AG04449 (cell line): ENCODE measurements at regions of chr15 and their contacts with region 1.

Region 1: DNA sequence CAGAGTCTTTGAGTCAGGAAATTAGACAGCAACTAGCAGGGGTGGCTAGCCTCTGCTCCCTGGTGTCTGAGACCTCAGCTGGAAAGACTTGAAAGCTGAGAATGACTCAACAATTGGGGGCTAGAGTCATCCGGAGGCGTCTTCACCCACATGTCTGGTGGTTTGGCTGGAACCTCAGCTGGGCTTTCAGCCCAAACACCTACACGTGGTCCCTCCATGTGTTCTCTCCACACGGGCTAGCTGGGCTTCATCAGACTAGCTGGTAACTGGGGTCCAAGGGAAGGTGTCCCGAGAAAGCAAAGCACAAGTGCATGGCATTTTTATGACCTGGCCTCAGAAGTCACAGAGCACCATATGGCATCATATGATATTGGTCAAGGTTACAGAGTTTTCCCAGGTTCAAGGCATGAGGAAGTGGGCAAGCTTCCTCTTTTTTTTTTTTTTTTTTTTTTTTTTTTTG is 19.9 kb upstream of the ABHD2 start:
- DNase-seq: peak; percentile 69
- H3K4me3 ChIP-seq: no peak overlapping the region
- CTCF ChIP-seq: no peak

Region 2: DNA sequence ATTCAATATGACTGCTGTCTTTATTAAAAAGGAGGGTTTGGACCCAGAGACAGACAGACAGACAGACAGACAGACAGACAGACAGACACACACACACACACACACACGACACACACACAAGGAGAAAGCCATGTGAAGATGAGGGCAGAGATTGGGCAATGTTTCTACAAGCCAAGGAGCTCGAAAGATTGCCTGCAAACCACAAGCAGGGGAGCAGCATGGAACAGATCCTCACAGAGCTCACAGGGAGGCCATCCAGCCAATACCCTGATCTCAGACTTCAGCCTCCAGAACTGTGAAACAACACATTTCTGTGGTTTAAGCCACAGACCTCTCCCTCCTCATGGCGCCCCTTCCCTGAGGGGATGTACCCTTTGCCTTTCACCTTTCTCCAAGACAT is 15.9 kb before region 1 on chr15:
- CTCF ChIA-PET with region 1: interaction called, 33 read pairs
- POLR2A ChIA-PET with region 1: interaction called, 10 read pairs
- DNase-seq: peak; percentile 99
- H3K4me3 ChIP-seq: no peak overlapping the region
- CTCF ChIP-seq: no peak

Region 3: DNA sequence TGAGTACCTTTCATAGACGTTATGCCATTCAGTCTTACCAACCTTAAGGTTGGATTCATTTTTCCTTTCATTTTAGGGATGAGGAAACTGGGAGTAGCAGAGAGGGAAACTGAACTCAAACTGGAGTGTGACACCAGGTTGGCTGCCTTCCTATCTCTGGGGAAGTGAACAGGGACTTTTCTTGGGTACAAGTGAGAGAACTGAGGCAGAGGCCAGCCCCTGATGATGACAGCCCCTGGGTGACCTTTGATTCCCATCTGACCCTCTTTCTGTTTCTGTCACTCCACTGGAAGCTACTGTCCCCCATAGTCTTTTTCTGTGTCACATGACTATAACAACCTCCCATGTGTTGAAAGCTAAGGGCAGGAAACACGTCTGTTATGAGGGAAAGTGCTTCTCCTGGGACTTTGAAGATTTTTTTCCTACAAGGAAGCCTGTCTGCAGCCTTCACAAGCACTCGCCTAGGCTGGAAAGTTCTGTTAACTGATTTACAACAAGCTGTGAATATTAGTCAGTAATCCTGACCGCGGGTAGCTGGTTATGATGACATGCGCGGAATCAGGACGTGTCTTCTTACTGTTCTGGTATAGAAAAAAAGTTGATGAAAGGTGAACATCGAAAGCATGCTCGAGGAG is 51.3 kb after region 1 on chr15:
- CTCF ChIA-PET with region 1: no interaction called
- POLR2A ChIA-PET with region 1: no interaction called
- DNase-seq: no peak
- H3K4me3 ChIP-seq: no peak overlapping the region
- CTCF ChIP-seq: no peak